Activated CD4-positive, alpha-beta memory T cell treated with anti-CD3 and anti-CD28 coated beads for 36 hours (primary cell): ENCODE measurements at regions of chr19 and their contacts with region 1.

Region 1: GRCh38 chr19:44890366-44891015 is 563 bp upstream of the TOMM40 start:
- DNase-seq: peak; percentile 100
- H3K4me3 Mint-ChIP-seq: peak overlapping the region; percentile 85
- H3K27ac Mint-ChIP-seq: peak overlapping the region; percentile 97
- H3K4me1 Mint-ChIP-seq: peaks cover 27% of the 10 kb centered on the region
- H3K27me3 Mint-ChIP-seq: no peaks in the 10 kb centered on the region

Region 2: GRCh38 chr19:44752816-44753618 is 137.5 kb before region 1 on chr19:
- CTCF ChIA-PET with region 1: no interaction called
- POLR2A ChIA-PET with region 1: no interaction called
- intact Hi-C with region 1: loop called (anchors 2 kb)
- DNase-seq: peak; percentile 99
- H3K4me3 Mint-ChIP-seq: peak overlapping the region; percentile 93
- H3K27ac Mint-ChIP-seq: peak overlapping the region; percentile 99
- H3K4me1 Mint-ChIP-seq: peaks cover 52% of the 10 kb centered on the region
- H3K27me3 Mint-ChIP-seq: no peaks in the 10 kb centered on the region

Region 3: DNA sequence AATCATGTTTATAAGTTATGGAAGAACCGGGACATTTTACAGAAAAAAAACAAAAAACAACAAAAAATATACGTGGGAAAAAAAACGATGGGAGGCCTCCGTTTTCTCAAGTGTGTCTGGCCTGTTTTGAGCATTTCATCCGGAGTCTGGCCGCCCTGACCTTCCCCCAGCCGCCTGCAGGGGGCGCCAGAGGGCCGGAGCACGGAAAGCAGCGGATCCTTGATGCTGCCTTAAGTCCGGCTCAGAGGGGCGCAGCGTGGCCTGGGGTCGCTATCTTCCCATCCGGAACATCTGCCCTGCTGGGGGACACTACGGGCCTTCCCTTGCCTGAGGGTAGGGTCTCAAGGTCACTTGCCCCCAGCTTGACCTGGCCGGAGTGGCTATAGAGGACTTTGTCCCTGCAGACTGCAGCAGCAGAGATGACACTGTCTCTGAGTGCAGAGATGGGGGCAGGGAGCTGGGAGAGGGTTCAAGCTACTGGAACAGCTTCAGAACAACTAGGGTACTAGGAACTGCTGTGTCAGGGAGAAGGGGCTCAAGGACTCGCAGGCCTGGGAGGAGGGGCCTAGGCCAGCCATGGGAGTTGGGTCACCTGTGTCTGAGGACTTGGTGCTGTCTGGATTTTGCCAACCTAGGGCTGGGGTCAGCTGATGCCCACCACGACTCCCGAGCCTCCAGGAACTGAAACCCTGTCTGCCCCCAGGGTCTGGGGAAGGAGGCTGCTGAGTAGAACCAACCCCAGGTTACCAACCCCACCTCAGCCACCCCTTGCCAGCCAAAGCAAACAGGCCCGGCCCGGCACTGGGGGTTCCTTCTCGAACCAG is 13.3 kb after region 1 on chr19:
- CTCF ChIA-PET with region 1: interaction called, 23 read pairs
- POLR2A ChIA-PET with region 1: interaction called, 3 read pairs
- intact Hi-C with region 1: no loop called
- DNase-seq: peak; percentile 82
- H3K4me3 Mint-ChIP-seq: no peak overlapping the region
- H3K27ac Mint-ChIP-seq: no peak overlapping the region
- H3K4me1 Mint-ChIP-seq: peaks cover 6% of the 10 kb centered on the region
- H3K27me3 Mint-ChIP-seq: peaks cover 18% of the 10 kb centered on the region

Region 4: DNA sequence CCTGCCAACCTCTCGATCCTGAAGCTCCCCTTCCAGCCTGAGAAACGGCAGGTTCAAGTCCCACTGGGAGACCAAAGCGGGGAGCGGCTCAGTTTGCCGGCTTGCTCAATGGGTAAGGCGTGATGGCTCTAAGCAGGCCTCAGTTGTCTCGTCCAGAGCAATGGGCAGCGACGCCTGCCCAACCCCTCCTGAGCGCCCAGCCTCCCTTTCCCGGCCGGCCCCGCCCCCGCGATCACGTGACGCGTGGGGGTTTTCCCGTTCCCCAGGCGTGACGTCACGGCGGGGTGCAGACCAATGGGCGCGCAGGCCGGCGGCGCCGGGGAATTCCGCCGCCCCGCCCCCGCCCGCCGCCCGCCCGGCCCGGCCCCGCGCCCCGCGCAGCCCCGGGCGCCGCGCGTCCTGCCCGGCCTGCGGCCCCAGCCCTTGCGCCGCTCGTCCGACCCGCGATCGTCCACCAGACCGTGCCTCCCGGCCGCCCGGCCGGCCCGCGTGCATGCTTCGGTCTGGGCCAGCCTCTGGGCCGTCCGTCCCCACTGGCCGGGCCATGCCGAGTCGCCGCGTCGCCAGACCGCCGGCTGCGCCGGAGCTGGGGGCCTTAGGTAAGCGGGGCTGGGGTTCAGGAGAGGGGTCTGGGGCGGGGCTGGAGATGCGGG is 110.7 kb after region 1 on chr19 and contains the start of gene RELB:
- CTCF ChIA-PET with region 1: no interaction called
- POLR2A ChIA-PET with region 1: interaction called, 4 read pairs
- intact Hi-C with region 1: loop called (anchors 1 kb)
- DNase-seq: peak; percentile 97
- H3K4me3 Mint-ChIP-seq: peak within 1 kb of the TSS; percentile 96
- H3K27ac Mint-ChIP-seq: peak within 1 kb of the TSS; percentile 99
- H3K4me1 Mint-ChIP-seq: peaks cover 22% of the 10 kb centered on the region
- H3K27me3 Mint-ChIP-seq: no peaks in the 10 kb centered on the region
- total RNA-seq, gene RELB: 62.4 to 63.1 TPM

Region 5: GRCh38 chr19:45092747-45093678 is 202.5 kb after region 1 on chr19 and contains the start of gene PPP1R37:
- CTCF ChIA-PET with region 1: no interaction called
- POLR2A ChIA-PET with region 1: no interaction called
- intact Hi-C with region 1: loop called (anchors 1 kb)
- DNase-seq: peak; percentile 95
- H3K4me3 Mint-ChIP-seq: peak within 1 kb of the TSS; percentile 86
- H3K27ac Mint-ChIP-seq: peak within 1 kb of the TSS; percentile 97
- H3K4me1 Mint-ChIP-seq: peaks cover 46% of the 10 kb centered on the region
- H3K27me3 Mint-ChIP-seq: no peaks in the 10 kb centered on the region
- total RNA-seq, gene PPP1R37: 12.7 to 13.1 TPM